ENCODE measurements at regions of chr3 and their contacts with region 1.

Region 1: DNA sequence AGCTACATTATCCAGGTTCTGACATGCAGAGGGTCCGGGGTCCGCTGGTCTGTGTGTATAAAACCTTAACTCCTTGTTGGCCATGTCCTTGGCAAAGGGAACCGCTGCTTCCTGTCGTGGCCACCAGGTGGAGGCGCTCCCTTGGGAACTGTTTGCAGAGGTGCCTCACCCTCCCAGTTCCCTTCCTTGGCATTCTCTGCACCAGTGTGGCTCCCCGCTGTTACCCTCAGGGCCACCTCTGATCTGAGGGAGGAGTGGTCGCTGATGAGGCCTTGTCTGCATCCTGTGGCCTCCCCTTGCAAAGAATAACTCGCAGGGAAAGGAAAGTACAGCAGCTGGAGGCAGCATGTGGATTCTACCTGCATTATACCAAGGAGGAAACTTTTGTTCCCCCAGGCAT is 89.6 kb downstream of the CHRD start:
- DNase-seq: peak; percentile 17
- ATAC-seq: peak; percentile 85
- H3K4me3 ChIP-seq: no peak overlapping the region
- H3K27ac ChIP-seq: no peak overlapping the region
- H3K4me1 ChIP-seq: no peaks in the 10 kb centered on the region
- H3K27me3 ChIP-seq: peaks cover 22% of the 10 kb centered on the region
- CTCF ChIP-seq: peak; percentile 88

Region 2: DNA sequence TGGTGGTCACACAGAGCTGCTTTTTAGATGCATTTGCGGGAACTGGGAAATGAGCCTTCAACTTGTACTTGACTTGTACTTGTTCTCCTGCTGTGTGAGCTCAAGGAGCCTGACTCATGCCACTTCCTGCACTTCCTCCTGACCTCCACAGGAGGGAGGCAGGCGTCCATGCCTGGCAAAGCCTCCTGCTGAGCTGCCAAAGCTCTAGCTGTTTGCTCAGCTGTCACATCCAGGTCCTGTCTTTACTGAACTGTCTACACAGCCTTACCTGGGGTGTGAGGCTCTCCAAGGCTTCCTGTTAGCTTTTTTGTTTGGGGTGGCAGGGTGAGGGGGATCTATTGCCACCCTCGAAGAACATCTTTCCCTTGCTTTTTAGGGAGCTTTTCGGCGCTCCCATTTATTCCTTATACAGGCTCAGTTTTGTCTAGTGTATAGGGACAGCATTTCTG is 97.8 kb before region 1 on chr3:
- CTCF ChIA-PET with region 1: interaction called, 24 read pairs
- POLR2A ChIA-PET with region 1: no interaction called
- in situ Hi-C with region 1: no loop called
- intact Hi-C with region 1: loop called (anchors 2 kb)
- DNase-seq: peak; percentile 84
- ATAC-seq: peak; percentile 93
- H3K4me3 ChIP-seq: no peak overlapping the region
- H3K27ac ChIP-seq: no peak overlapping the region
- H3K4me1 ChIP-seq: peaks cover 12% of the 10 kb centered on the region
- H3K27me3 ChIP-seq: peaks cover 8% of the 10 kb centered on the region
- CTCF ChIP-seq: peak; percentile 98

Region 3: DNA sequence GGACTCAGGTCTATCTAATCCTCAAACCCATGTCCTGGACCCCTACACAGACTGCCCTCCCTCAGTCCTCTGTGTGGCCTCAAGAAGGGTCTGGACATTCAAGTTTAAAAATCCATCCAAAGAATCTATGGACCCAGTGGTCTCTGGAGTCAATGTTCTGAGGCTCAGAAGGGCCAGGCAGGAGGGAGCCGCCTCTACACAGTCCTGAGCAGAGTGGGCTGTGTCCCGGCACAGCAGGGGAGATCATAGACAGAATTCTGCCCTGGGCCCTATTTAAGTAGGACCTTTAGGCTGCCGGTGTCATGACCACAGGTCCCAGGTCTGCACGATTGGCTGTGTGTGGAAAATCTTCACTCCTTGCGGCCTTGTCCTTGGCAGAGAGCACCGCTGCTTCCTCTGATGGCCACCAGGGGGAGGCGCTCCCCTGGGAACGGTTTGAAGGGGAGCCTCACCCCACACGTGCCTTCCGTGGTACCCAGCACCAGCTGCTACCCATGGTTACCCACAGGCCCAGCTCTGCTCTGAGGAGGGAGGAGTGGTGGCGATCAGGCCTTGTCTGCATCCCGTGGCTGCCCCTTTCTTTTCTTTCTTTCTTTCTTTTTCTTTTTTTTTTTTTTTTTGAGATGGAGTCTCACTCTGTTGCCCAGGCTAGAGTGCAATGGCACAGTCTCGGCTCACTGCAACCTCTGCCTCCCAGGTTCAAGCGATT is 51.6 kb before region 1 on chr3:
- CTCF ChIA-PET with region 1: interaction called, 3 read pairs
- POLR2A ChIA-PET with region 1: no interaction called
- in situ Hi-C with region 1: no loop called
- intact Hi-C with region 1: loop called (anchors 2 kb)
- DNase-seq: peak; percentile 22
- ATAC-seq: peak; percentile 93
- H3K4me3 ChIP-seq: no peak overlapping the region
- H3K27ac ChIP-seq: no peak overlapping the region
- H3K4me1 ChIP-seq: no peaks in the 10 kb centered on the region
- H3K27me3 ChIP-seq: no peaks in the 10 kb centered on the region
- CTCF ChIP-seq: peak; percentile 98

Region 4: DNA sequence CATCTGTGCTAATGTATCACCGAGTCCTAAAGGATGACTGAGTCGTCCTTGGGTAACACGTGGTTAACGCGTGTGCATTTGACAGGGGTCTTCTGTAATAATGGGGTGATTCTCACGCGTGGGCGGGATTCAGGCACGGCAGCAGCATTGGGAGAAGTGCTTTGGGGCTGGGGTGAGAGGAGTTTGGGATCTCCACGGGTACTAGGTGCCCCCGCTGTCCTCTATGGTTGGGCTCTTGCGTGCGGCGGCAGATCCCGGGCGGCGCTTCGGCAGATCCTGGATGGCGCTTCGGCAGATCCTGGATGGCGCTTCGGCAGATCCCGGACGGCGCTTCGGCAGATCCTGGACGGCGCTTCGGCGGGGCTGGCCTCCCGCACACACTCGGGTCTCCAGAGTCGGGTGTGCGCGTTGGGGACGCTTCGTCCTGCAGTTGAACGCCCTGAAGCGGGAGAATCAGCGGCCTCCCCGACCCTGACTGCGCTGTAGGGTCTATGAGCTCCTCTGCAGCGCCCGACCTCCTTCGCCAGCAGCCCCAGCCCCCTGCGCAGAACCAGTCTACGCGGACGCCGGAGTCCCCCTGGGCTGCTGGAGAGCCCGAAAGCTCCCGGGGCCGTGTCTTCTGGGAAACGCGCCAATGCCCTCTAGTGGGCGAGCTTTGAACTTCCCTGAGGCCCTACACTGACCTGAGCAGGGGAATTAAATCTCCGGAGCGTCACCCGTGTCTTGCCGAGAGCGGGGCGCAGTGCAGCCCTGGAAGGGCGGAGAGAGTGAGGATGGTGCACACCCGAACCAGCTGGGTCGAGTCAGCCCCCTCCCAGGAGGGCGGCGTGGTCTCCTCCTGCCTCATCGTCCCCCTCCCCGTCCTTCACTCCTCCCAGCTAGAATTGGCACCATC is 44.1 kb after region 1 on chr3:
- CTCF ChIA-PET with region 1: interaction called, 8 read pairs
- POLR2A ChIA-PET with region 1: no interaction called
- in situ Hi-C with region 1: no loop called
- intact Hi-C with region 1: loop called (anchors 2 kb)
- DNase-seq: peak; percentile 46
- ATAC-seq: peak; percentile 99
- H3K4me3 ChIP-seq: peak overlapping the region; percentile 31 to 50
- H3K27ac ChIP-seq: no peak overlapping the region
- H3K4me1 ChIP-seq: 0 out of 2 replicates have a peak, but pooled peaks cover 2% of the 10 kb centered on the region
- H3K27me3 ChIP-seq: peaks cover 58% of the 10 kb centered on the region
- CTCF ChIP-seq: peak; percentile 98

Region 5: DNA sequence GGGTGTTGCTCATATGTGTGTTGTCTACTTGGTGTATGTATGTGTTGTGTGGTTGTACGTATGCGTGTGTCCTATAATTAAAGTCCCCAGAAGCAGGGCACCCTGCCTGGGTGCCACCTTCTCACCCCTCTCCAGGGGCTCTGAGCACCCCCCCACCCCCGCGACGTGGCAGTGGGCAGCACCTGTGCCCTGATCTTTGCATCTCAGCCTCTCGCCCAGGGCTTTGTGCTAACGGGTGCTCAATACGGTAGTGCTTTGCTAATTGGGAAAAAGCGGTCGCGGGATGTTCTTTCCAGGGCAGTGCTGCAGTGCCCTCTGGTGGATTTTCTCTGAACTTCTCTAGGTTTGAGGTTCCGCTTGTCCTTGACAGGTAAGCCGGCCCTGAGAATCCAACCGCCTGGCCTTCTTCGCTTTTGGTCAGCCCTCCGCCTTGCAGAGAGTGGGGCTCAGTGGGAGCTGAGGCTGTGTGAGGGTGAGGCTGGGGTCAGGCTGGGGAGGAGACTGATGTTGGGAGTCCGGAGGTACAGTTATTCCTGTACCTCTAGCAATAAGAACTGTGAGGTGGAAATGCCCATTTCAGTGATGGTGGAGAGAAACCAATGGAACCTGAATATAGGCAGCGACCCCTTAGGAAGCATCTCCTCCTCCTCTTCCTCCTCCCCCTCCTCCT is 74.6 kb after region 1 on chr3:
- CTCF ChIA-PET with region 1: interaction called, 5 read pairs
- POLR2A ChIA-PET with region 1: no interaction called
- in situ Hi-C with region 1: no loop called
- intact Hi-C with region 1: loop called (anchors 1 kb)
- DNase-seq: peak; percentile 76
- ATAC-seq: peak; percentile 85
- H3K4me3 ChIP-seq: no peak overlapping the region
- H3K27ac ChIP-seq: no peak overlapping the region
- H3K4me1 ChIP-seq: no peaks in the 10 kb centered on the region
- H3K27me3 ChIP-seq: 0 out of 2 replicates have a peak, but pooled peaks cover 5% of the 10 kb centered on the region
- CTCF ChIP-seq: peak; percentile 97

Measured in Panc1 (cell line).